ENCODE measurements at regions of chr1 and their contacts with region 1.

Region 1: GRCh38 chr1:172745014-172745413 is 86.1 kb downstream of the FASLG start:
- DNase-seq: peak in 7 of 14 experiments; percentile 9 to 80 (median 52)
- ATAC-seq: peak; percentile 70
- H3K4me3 ChIP-seq: no peak overlapping the region
- H3K4me3 Mint-ChIP-seq: peak overlapping the region; percentile 72
- H3K27ac ChIP-seq: no peak overlapping the region
- H3K27ac Mint-ChIP-seq: peak overlapping the region; percentile 1
- H3K4me1 ChIP-seq: peaks cover 23% of the 10 kb centered on the region
- H3K4me1 Mint-ChIP-seq: peaks cover 37% of the 10 kb centered on the region
- H3K27me3 ChIP-seq: no peaks in the 10 kb centered on the region
- H3K27me3 Mint-ChIP-seq: no peaks in the 10 kb centered on the region
- CTCF ChIP-seq: peak; percentile 87

Region 2: GRCh38 chr1:173202430-173203145 is 457.6 kb after region 1 on chr1:
- CTCF ChIA-PET with region 1: interaction called, 12 read pairs
- POLR2A ChIA-PET with region 1: interaction called, 4 read pairs
- intact Hi-C with region 1: loop called (anchors 1 kb)
- DNase-seq: peak in 4 of 14 experiments; percentile 22 to 51 (median 45)
- ATAC-seq: no peak
- H3K4me3 ChIP-seq: no peak overlapping the region
- H3K4me3 Mint-ChIP-seq: no peak overlapping the region
- H3K27ac ChIP-seq: no peak overlapping the region
- H3K27ac Mint-ChIP-seq: peak overlapping the region; percentile 7
- H3K4me1 ChIP-seq: peaks cover 28% of the 10 kb centered on the region
- H3K4me1 Mint-ChIP-seq: peaks cover 47% of the 10 kb centered on the region
- H3K27me3 ChIP-seq: no peaks in the 10 kb centered on the region
- H3K27me3 Mint-ChIP-seq: no peaks in the 10 kb centered on the region
- CTCF ChIP-seq: peak; percentile 56

Region 3: DNA sequence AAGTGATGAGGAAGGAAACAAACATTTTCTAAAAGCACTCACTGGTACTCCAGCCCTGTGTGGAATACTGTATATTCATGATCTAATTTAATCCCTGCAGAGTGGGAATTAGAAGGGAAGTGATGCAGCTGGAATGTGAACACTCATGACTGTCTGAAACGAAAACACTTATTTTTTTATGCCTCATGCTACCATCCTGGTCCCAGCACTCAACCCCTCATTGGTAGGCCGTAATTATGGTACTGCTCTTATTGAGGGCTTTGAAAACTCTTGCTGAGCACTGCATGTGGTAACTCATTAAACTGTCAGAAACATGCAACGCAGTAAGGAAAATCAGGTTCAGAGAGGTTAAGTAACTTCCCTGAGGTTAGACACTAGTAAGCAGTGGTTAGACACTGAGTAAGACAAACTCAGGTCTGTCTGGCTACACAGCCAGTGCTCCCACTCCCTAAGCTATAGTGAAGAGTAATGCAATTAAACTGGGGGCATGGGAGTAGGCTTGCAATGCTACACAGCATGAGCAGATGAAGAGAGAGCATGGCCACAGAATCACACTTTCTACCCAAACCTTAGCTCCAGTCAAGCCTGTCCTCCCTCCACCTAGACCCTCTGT is 479.4 kb after region 1 on chr1:
- CTCF ChIA-PET with region 1: no interaction called
- POLR2A ChIA-PET with region 1: no interaction called
- intact Hi-C with region 1: no loop called
- DNase-seq: no peak
- ATAC-seq: no peak
- H3K4me3 ChIP-seq: no peak overlapping the region
- H3K4me3 Mint-ChIP-seq: no peak overlapping the region
- H3K27ac ChIP-seq: no peak overlapping the region
- H3K27ac Mint-ChIP-seq: no peak overlapping the region
- H3K4me1 ChIP-seq: no peaks in the 10 kb centered on the region
- H3K4me1 Mint-ChIP-seq: no peaks in the 10 kb centered on the region
- H3K27me3 ChIP-seq: no peaks in the 10 kb centered on the region
- H3K27me3 Mint-ChIP-seq: no peaks in the 10 kb centered on the region
- CTCF ChIP-seq: no peak

Region 4: GRCh38 chr1:173429471-173430402 is 684.7 kb after region 1 on chr1:
- CTCF ChIA-PET with region 1: interaction called, 10 read pairs
- POLR2A ChIA-PET with region 1: interaction called, 5 read pairs
- intact Hi-C with region 1: loop called in 1 of 2 experiments (anchors 2 kb)
- DNase-seq: peak; percentile 44 to 78 (median 58)
- ATAC-seq: peak; percentile 85
- H3K4me3 ChIP-seq: peak overlapping the region; percentile 16
- H3K4me3 Mint-ChIP-seq: peak overlapping the region; percentile 38
- H3K27ac ChIP-seq: no peak overlapping the region
- H3K27ac Mint-ChIP-seq: peak overlapping the region; percentile 6
- H3K4me1 ChIP-seq: peaks cover 13% of the 10 kb centered on the region
- H3K4me1 Mint-ChIP-seq: peaks cover 23% of the 10 kb centered on the region
- H3K27me3 ChIP-seq: no peaks in the 10 kb centered on the region
- H3K27me3 Mint-ChIP-seq: no peaks in the 10 kb centered on the region
- CTCF ChIP-seq: peak; percentile 71

Region 5: GRCh38 chr1:173714759-173715537 is 969.9 kb after region 1 on chr1 and contains the start of gene KLHL20:
- CTCF ChIA-PET with region 1: no interaction called
- POLR2A ChIA-PET with region 1: no interaction called
- intact Hi-C with region 1: loop called (anchors 5 to 10 kb)
- DNase-seq: peak; percentile 70 to 94 (median 81)
- ATAC-seq: peak; percentile 97
- H3K4me3 ChIP-seq: peak within 1 kb of the TSS; percentile 63
- H3K4me3 Mint-ChIP-seq: peak within 1 kb of the TSS; percentile 97
- H3K27ac ChIP-seq: peak within 1 kb of the TSS; percentile 73 to 81
- H3K27ac Mint-ChIP-seq: peak within 1 kb of the TSS; percentile 91
- H3K4me1 ChIP-seq: peaks cover 8% of the 10 kb centered on the region
- H3K4me1 Mint-ChIP-seq: peaks cover 36% of the 10 kb centered on the region
- H3K27me3 ChIP-seq: peaks cover 4 to 19% of the 10 kb centered on the region in 2 experiments
- H3K27me3 Mint-ChIP-seq: peaks cover 18% of the 10 kb centered on the region
- CTCF ChIP-seq: no peak
- total RNA-seq, gene KLHL20: 29.4 to 30.4 TPM

Region 6: GRCh38 chr1:173954179-173954578 is 1209.2 kb after region 1 on chr1:
- CTCF ChIA-PET with region 1: no interaction called
- POLR2A ChIA-PET with region 1: no interaction called
- intact Hi-C with region 1: loop called in 1 of 2 experiments (anchors 5 kb)
- DNase-seq: no peak
- ATAC-seq: no peak
- H3K4me3 ChIP-seq: no peak overlapping the region
- H3K4me3 Mint-ChIP-seq: no peak overlapping the region
- H3K27ac ChIP-seq: no peak overlapping the region
- H3K27ac Mint-ChIP-seq: no peak overlapping the region
- H3K4me1 ChIP-seq: no peaks in the 10 kb centered on the region
- H3K4me1 Mint-ChIP-seq: peaks cover 16% of the 10 kb centered on the region
- H3K27me3 ChIP-seq: no peaks in the 10 kb centered on the region
- H3K27me3 Mint-ChIP-seq: no peaks in the 10 kb centered on the region
- CTCF ChIP-seq: no peak

Region 7: GRCh38 chr1:174217787-174218574 is 1473.0 kb after region 1 on chr1:
- CTCF ChIA-PET with region 1: no interaction called
- POLR2A ChIA-PET with region 1: no interaction called
- intact Hi-C with region 1: loop called (anchors 2 to 5 kb)
- DNase-seq: peak in 3 of 14 experiments; percentile 55 to 66 (median 65)
- ATAC-seq: peak; percentile 79
- H3K4me3 ChIP-seq: no peak overlapping the region
- H3K4me3 Mint-ChIP-seq: no peak overlapping the region
- H3K27ac ChIP-seq: no peak overlapping the region
- H3K27ac Mint-ChIP-seq: no peak overlapping the region
- H3K4me1 ChIP-seq: no peaks in the 10 kb centered on the region
- H3K4me1 Mint-ChIP-seq: no peaks in the 10 kb centered on the region
- H3K27me3 ChIP-seq: no peaks in the 10 kb centered on the region
- H3K27me3 Mint-ChIP-seq: no peaks in the 10 kb centered on the region
- CTCF ChIP-seq: peak; percentile 88

Region 8: DNA sequence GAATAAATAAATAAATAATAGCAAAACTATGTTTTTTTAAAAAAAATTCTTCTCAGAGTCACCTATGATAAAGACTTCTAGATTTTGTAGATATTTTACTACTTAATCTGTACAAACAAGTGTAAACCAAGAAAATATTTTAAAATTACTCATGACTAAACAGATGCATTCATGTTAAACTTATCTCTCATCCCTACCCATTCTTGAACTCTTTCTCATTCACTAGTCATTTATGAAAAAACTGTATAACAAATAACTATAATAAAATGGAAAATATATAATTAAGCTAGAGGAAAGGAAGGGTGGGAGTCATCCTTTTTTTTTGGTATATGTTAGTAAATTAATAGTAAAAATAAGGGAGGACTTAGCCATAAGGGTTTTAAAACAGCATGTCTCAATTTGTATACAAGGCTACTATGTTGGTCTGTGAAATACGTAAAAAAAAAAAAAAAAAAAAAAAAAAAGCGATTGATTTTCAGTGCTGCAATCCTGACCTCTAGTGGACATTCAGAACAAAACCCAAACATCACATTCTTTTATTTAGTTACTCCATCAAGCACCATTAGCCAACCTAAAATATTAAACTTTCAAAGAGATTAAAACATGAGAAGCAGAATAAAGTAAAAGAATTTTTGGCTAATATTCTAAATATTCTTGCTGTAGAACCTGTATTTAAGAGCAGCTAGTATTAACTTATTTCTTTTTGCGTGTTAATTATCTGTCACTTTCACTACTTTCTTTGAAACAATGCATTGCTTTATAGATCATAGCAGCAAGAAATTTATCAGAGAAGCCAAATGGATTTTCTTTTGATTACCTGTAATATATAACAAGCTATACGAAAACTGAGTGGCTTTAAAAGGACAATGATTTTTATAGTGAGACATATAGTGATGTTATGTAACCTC is 1998.9 kb after region 1 on chr1:
- CTCF ChIA-PET with region 1: no interaction called
- POLR2A ChIA-PET with region 1: no interaction called
- intact Hi-C with region 1: loop called in 1 of 2 experiments (anchors 5 kb)
- DNase-seq: peak in 3 of 14 experiments; percentile 56 to 72 (median 71)
- ATAC-seq: peak; percentile 44
- H3K4me3 ChIP-seq: no peak overlapping the region
- H3K4me3 Mint-ChIP-seq: no peak overlapping the region
- H3K27ac ChIP-seq: no peak overlapping the region
- H3K27ac Mint-ChIP-seq: no peak overlapping the region
- H3K4me1 ChIP-seq: peaks cover 3% of the 10 kb centered on the region
- H3K4me1 Mint-ChIP-seq: peaks cover 9% of the 10 kb centered on the region
- H3K27me3 ChIP-seq: no peaks in the 10 kb centered on the region
- H3K27me3 Mint-ChIP-seq: no peaks in the 10 kb centered on the region
- CTCF ChIP-seq: peak; percentile 87